Left colon (tissue), 2 donors: ENCODE measurements at regions of chr1 and their contacts with region 1.

Region 1: DNA sequence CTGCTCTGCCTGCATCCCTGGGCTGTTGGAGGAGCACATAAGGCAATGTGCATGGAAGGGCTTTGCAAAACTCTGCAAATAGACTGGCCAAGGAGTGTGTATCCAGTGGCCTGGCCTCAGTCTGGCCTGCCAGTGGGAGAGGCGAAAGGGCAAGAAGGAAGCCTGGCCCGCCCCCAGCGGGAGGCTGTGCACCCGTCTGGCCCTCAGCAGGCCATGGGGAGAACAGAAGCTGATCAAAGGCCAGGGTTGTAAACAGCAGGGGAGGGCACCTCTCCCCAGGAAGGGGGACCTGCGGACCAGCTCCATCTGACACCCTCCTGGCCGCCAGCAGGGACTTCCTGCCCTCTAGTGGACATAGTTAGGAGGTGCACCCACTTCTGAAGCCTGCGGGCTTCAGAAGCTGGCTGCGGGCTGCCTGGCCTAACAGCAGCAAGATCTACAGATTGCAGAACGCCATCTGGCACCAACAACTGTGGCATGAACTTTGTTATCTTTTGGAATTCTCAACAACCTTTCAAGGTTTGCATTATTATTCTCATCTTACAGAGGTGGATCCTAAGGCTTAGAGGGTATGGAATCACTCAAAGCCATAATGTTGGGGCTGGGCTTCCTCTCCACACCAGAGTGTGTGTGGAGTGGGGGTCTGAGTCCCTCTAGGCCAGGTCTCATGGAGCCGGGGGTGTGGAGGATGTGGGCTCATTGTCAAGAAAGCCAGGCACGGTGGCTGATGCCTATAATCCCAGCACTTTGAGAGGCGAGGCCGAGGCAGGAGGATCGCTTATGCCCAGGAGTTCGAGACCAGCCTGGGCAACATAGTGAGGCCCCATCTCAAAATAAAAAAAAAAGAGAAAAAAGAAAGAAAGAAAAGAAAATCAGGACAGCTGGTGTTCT is 18.9 kb upstream of the CDK18 start:
- DNase-seq: peak; percentile 66 to 68
- ATAC-seq: peak; percentile 84

Region 2: GRCh38 chr1:205354259-205354904 is 131.2 kb before region 1 on chr1:
- intact Hi-C with region 1: loop called (anchors 5 to 10 kb)
- DNase-seq: peak in 1 of 2 donors; percentile 67
- ATAC-seq: peak; percentile 35

Region 3: GRCh38 chr1:205396967-205397616 is 88.5 kb before region 1 on chr1:
- intact Hi-C with region 1: loop called in 1 of 2 experiments (anchors 10 kb)
- DNase-seq: peak in 1 of 2 donors; percentile 11
- ATAC-seq: peak; percentile 81

Region 4: GRCh38 chr1:205523891-205524793 is 38.6 kb after region 1 on chr1:
- intact Hi-C with region 1: loop called in 1 of 2 experiments (anchors 5 kb)
- DNase-seq: peak; percentile 64 to 88
- ATAC-seq: peak; percentile 61